ENCODE measurements at regions of chr11 and their contacts with region 1.

Region 1: DNA sequence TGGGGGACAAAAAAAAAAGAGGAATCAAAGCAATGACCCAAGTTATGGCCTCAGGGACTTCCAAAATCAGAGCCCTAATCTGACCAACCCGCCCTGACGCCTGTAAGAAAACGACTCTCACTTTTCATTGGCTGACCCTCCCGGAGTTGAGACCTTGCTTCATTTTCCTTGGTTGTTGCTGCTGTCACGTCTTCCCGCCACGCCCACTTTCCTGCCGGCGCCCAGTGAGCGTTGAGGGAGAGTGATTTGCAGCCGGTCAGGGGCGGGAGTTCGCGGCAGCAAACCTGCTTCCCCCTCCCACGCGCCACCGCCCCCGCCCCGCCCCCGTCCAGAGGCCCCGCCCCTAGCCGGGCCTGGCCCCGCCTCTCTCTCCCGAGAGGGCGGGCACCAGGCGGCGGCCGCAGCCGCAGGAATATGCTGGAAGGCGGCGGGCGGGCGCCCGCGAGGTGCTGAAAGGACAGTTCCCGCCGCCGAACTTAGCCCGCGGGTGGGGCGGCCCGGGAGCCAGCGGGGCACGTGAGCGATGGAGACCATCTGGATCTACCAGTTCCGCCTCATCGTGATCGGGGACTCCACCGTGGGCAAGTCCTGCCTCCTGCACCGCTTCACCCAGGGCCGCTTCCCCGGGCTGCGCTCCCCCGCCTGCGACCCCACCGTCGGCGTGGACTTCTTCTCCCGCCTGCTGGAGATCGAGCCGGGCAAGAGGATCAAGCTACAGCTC is at the start of gene RAB39A:
- DNase-seq: peak; percentile 73 to 99 (median 92)

Region 2: GRCh38 chr11:108008656-108009496 is 80.7 kb after region 1 on chr11 and contains the start of gene CUL5:
- intact Hi-C with region 1: loop called (anchors 2 kb)
- DNase-seq: peak; percentile 85 to 98 (median 90)

Region 3: GRCh38 chr11:108025387-108026080 is 97.3 kb after region 1 on chr11:
- intact Hi-C with region 1: no loop called
- DNase-seq: no peak

Region 4: DNA sequence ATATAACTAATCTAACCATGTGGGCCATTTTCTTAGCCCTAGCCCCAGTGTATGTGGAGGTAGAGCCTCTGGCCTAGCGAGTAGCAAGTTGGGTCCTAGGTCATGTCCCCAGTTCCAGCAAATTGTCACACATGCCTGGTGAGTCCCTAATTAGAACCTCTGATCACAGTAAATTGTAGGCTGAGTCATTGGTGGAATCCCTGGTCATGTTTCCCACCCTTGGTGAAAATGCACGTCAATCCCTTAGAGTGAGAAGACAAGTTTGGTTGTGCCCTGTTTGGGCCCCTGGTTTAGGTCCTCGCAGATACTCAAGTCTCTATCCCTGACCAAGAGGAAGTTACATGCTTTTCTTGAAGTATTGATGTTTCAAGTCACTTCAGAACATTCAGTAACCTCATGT is 341.4 kb after region 1 on chr11:
- intact Hi-C with region 1: no loop called
- DNase-seq: no peak